Activated naive CD4-positive, alpha-beta T cell treated with anti-CD3 and anti-CD28 coated beads for 36 hours (primary cell): ENCODE measurements at regions of chr10 and their contacts with region 1.

Region 1: DNA sequence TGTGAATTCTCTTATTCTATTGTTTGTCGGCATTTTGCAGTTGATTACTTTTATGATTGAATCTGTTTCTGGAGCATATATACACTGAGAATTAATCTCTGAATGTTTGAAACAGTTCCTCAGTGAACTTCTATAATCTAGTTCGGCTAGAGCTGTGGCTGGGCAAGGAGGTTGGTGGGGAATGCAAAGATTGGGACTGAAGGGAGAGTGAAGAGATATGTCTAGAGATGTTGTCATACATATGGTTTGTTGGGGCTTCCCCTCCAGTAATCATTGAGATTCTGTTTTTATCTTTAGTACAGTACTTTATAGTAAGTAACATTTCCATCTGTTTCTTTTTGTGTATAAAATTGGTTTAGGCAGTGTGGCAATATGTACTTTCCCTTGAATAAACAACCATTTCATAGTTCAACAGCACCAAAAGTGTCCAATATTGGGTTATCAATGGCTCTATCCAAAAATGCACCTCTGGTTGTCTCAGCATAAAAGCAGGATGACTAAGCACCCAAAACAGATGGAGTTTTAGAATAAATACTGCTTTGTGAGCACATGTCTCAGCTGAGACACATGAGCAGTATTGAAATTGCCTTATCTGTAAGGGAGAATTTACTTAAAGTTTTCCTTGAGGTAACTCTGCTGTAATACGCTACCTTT is 36.7 kb downstream of the WAC start:
- DNase-seq: no peak
- H3K4me3 Mint-ChIP-seq: no peak overlapping the region
- H3K27ac Mint-ChIP-seq: peak overlapping the region; percentile 7
- H3K4me1 Mint-ChIP-seq: peaks cover 80% of the 10 kb centered on the region
- H3K27me3 Mint-ChIP-seq: no peaks in the 10 kb centered on the region

Region 2: DNA sequence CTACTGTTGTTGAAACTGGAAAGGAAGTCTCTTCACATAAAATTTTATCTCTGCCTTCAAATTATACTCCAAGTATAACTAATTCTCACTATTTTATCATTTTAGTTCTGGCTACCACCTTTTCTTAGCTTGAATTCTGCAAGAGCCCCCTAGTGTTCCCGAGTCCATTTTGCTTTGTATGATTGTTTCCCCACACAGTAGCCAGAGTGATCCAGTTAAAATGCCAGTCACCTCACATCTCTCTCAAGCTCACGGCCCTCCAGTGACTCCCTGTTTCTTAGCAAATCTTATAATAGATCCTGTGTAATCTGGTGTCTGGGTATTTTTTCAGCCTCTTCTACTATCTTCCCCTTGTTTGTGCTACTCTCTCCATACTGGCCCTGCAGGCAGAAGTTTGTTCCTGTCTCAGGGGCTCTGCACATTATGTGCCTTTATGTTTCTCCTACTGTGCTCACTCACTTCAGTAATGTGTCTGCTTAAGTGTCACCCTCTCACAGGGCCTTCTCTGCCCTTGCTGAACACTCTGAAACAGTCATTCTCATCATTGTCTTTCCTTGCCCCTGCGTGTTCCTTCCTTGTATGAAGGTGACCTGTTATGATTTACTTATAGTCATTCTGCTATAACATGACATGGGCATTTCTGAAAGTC is 27.8 kb before region 1 on chr10:
- CTCF ChIA-PET with region 1: no interaction called
- intact Hi-C with region 1: loop called (anchors 2 kb)
- DNase-seq: no peak
- H3K4me3 Mint-ChIP-seq: no peak overlapping the region
- H3K27ac Mint-ChIP-seq: no peak overlapping the region
- H3K4me1 Mint-ChIP-seq: peaks cover 64% of the 10 kb centered on the region
- H3K27me3 Mint-ChIP-seq: no peaks in the 10 kb centered on the region

Region 3: GRCh38 chr10:28585076-28585475 is 15.4 kb after region 1 on chr10:
- CTCF ChIA-PET with region 1: interaction called, 3 read pairs
- intact Hi-C with region 1: loop called (anchors 2 kb)
- DNase-seq: no peak
- H3K4me3 Mint-ChIP-seq: no peak overlapping the region
- H3K27ac Mint-ChIP-seq: no peak overlapping the region
- H3K4me1 Mint-ChIP-seq: peaks cover 41% of the 10 kb centered on the region
- H3K27me3 Mint-ChIP-seq: no peaks in the 10 kb centered on the region

Region 4: DNA sequence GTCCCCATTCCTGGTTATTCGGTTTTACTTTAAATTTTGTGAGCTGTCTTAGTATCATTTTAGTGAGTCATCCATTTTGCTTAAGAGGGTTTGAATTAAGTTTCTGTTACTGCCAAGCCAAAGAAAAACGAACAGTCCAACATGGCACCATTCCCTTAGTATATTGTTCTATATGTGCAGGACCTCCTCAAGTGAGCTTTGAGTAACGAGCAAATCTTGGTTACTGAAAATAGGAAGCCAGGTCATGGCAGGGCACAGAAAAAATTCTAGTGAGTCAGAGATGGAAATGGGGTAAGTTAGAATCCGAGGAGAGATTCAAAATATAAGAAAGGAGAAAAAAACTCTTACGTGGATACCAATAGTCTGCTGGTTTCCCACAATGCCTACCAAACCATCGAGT is 400.6 kb after region 1 on chr10:
- CTCF ChIA-PET with region 1: no interaction called
- intact Hi-C with region 1: no loop called
- DNase-seq: no peak
- H3K4me3 Mint-ChIP-seq: no peak overlapping the region
- H3K27ac Mint-ChIP-seq: no peak overlapping the region
- H3K4me1 Mint-ChIP-seq: no peaks in the 10 kb centered on the region
- H3K27me3 Mint-ChIP-seq: no peaks in the 10 kb centered on the region